ENCODE measurements at regions of chr9 and their contacts with region 1.

Region 1: DNA sequence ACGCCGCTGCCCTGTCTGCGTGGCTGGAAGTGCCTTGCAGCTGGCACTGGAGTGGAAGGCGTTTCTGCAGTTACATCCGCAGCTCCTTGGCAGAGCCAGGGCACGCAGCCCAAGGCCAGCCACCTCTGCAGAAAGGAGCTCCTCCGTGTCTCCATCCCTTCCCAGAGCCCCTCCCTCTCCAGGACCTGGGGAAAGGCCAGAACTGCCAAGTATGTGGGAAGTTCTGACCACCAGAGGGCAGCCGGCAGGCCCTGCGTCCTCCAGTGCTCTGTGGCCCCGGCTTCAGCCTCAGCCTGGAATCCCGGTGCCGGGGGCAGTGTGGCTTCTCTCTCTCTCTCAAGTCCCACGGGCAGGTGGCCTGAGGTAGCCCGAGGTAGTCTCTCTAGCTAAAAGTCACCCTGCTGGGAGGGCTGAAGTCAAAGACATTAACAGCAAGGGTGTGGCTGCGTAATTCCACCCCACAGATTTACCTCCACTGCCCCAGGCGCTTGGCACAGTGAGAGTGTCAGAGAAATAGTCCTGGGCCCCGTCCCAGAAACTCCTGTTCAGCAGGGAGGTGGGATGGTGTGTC is 101.7 kb upstream of the FCN2 start:
- DNase-seq: peak; percentile 54 to 84
- H3K4me3 ChIP-seq: no peak overlapping the region
- H3K27ac ChIP-seq: no peak overlapping the region
- H3K4me1 ChIP-seq: no peaks in the 10 kb centered on the region; a peak in 2 of 7 replicates
- H3K27me3 ChIP-seq: no peaks in the 10 kb centered on the region
- CTCF ChIP-seq: peak in 2 of 3 experiments; percentile 89 to 94; a peak in 3 of 4 replicates
- EP300 ChIP-seq: no peak
- POLR2A ChIP-seq: no peak
- RAD21 ChIP-seq: peak; percentile 83 to 89

Region 2: GRCh38 chr9:134758949-134759607 is 19.8 kb before region 1 on chr9:
- CTCF ChIA-PET with region 1: interaction called, 11 read pairs
- POLR2A ChIA-PET with region 1: interaction called, 3 read pairs
- DNase-seq: no peak
- H3K4me3 ChIP-seq: no peak overlapping the region
- H3K27ac ChIP-seq: no peak overlapping the region
- H3K4me1 ChIP-seq: no peaks in the 10 kb centered on the region
- H3K27me3 ChIP-seq: no peaks in the 10 kb centered on the region
- CTCF ChIP-seq: no peak
- EP300 ChIP-seq: no peak
- POLR2A ChIP-seq: no peak
- RAD21 ChIP-seq: no peak

Region 3: DNA sequence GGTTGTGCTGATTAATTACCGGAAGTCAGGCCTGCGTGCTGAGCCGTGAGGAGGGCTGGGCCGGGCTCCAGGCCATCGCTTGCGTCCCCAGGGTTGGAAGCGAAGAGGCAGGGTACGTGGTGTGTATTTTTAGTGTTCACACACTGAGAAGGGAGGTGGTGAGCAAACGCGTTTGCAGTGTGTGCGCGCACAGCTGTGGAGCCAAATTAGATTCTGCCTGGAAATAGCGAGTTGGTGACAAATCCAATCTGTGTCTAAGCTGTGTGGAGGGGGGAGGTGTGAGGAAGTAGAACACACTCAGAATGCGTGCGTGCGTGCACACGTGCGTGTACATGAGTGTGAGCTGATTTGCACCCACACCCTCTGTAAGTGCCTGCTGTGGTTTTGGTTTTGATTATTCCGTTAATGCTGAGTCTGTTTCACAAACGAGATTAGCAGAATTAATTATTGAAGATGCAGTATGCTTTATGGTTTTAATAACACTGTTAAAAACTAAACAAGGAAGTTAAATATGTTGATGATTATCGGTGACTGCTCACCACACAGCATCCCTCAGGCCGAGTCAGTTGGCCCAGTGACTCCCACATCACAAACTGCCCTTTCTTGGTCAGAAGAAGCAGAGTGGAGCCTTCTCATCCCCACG is 10.1 kb before region 1 on chr9:
- CTCF ChIA-PET with region 1: interaction called, 13 read pairs
- POLR2A ChIA-PET with region 1: no interaction called
- DNase-seq: no peak
- H3K4me3 ChIP-seq: no peak overlapping the region
- H3K27ac ChIP-seq: no peak overlapping the region
- H3K4me1 ChIP-seq: no peaks in the 10 kb centered on the region; a peak in 1 of 7 replicates
- H3K27me3 ChIP-seq: no peaks in the 10 kb centered on the region
- CTCF ChIP-seq: no peak
- EP300 ChIP-seq: no peak
- POLR2A ChIP-seq: no peak
- RAD21 ChIP-seq: no peak

Region 4: GRCh38 chr9:134793288-134794188 is 14.6 kb after region 1 on chr9:
- CTCF ChIA-PET with region 1: interaction called, 16 read pairs
- POLR2A ChIA-PET with region 1: interaction called, 3 read pairs
- DNase-seq: no peak
- H3K4me3 ChIP-seq: no peak overlapping the region
- H3K27ac ChIP-seq: no peak overlapping the region
- H3K4me1 ChIP-seq: no peaks in the 10 kb centered on the region; a peak in 1 of 7 replicates
- H3K27me3 ChIP-seq: no peaks in the 10 kb centered on the region; a peak in 1 of 7 replicates
- CTCF ChIP-seq: no peak
- EP300 ChIP-seq: no peak
- POLR2A ChIP-seq: no peak
- RAD21 ChIP-seq: no peak

Region 5: DNA sequence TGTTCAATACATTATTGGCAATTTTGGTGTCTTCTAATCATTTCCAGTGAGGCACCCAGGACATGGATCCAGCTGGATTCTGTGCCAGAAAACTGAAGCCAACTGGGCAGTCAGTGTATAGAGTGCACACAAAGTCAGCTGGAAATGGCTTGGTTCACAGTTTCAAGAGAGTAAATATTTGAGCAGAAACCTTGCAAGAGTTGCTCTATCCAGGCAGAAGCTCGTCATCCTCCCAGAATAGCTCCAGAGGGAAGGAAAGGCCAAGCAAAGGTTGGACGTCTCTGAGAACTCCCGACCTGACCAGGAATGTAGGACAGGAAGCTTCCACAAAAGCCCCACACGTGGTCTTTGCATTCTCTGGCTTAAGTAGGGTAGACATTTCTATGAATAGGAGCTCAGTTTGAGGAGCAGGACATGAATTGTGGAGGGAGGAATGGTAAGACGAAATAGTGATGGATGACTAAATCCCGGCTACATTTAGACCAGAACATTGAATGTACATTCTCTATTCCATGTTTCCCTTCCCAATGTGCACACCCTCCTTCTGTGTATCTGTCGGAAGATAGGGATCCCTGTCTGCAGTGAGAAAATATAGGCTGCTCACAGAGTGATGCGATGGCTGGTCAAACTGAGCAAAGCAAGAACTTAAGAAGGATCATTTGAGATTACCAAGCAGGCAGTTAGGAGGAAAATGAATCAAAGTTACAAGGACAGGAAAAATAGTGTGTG is 29.0 kb after region 1 on chr9:
- CTCF ChIA-PET with region 1: interaction called, 10 read pairs
- POLR2A ChIA-PET with region 1: no interaction called
- DNase-seq: no peak
- H3K4me3 ChIP-seq: no peak overlapping the region
- H3K27ac ChIP-seq: no peak overlapping the region
- H3K4me1 ChIP-seq: peaks cover 9 to 22% (median 14%) of the 10 kb centered on the region in 4 experiments; a peak in 6 of 7 replicates
- H3K27me3 ChIP-seq: no peaks in the 10 kb centered on the region
- CTCF ChIP-seq: no peak
- EP300 ChIP-seq: no peak
- POLR2A ChIP-seq: no peak
- RAD21 ChIP-seq: no peak

Region 6: GRCh38 chr9:134839455-134840125 is 60.7 kb after region 1 on chr9:
- CTCF ChIA-PET with region 1: interaction called, 19 read pairs
- POLR2A ChIA-PET with region 1: no interaction called
- DNase-seq: peak in 1 of 2 experiments; percentile 59
- H3K4me3 ChIP-seq: no peak overlapping the region
- H3K27ac ChIP-seq: no peak overlapping the region
- H3K4me1 ChIP-seq: no peaks in the 10 kb centered on the region
- H3K27me3 ChIP-seq: no peaks in the 10 kb centered on the region
- CTCF ChIP-seq: peak; percentile 65 to 80 (median 71)
- EP300 ChIP-seq: no peak
- POLR2A ChIP-seq: no peak
- RAD21 ChIP-seq: peak; percentile 31 to 55; a peak in 3 of 4 replicates

Region 7: DNA sequence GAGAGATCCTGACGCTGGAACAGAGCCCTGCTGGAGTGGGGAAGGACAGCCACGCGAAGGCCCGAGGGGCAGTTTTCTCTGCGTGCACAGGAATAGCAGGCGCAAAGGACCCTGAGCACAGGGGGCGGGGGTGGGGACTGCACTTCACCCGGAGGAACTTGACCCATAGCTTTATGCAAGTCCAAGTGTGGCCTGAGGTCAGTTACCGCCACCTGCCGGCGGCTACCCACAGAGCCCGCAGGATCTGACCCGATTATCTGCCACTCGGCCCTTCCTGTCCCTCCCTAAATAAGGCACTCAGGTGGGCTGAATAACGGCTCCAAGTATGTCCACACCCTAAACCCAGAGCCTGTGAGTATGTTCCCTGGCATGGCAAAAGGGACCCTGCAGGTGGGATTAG is 204.1 kb after region 1 on chr9:
- CTCF ChIA-PET with region 1: interaction called, 79 read pairs
- POLR2A ChIA-PET with region 1: no interaction called
- DNase-seq: peak; percentile 64 to 80
- H3K4me3 ChIP-seq: no peak overlapping the region
- H3K27ac ChIP-seq: no peak overlapping the region
- H3K4me1 ChIP-seq: peaks cover 0 to 8% (median 6%) of the 10 kb centered on the region in 4 experiments; a peak in 6 of 7 replicates
- H3K27me3 ChIP-seq: no peaks in the 10 kb centered on the region
- CTCF ChIP-seq: peak; percentile 79 to 85 (median 81)
- EP300 ChIP-seq: no peak
- POLR2A ChIP-seq: no peak
- RAD21 ChIP-seq: peak; percentile 93 to 94